ENCODE measurements at regions of chr12 and their contacts with region 1.

Region 1: GRCh38 chr12:49130151-49131050 is 794 bp downstream of the TUBA1B start:
- DNase-seq: peak; percentile 97
- ATAC-seq: peak; percentile 51
- H3K4me3 ChIP-seq: peak overlapping the region; percentile 94 to 100 (median 100)
- H3K4me3 Mint-ChIP-seq: peak overlapping the region; percentile 97
- H3K27ac ChIP-seq: peak overlapping the region; percentile 93 to 98
- H3K27ac Mint-ChIP-seq: peak overlapping the region; percentile 99
- H3K4me1 ChIP-seq: peaks cover 28 to 36% of the 10 kb centered on the region in 2 donors
- H3K4me1 Mint-ChIP-seq: peaks cover 56% of the 10 kb centered on the region
- H3K27me3 ChIP-seq: no peaks in the 10 kb centered on the region
- H3K27me3 Mint-ChIP-seq: no peaks in the 10 kb centered on the region
- CTCF ChIP-seq: peak; percentile 88

Region 2: GRCh38 chr12:49018261-49019119 is 111.9 kb before region 1 on chr12 and contains the start of gene PRKAG1:
- CTCF ChIA-PET with region 1: no interaction called
- POLR2A ChIA-PET with region 1: interaction called, 3 read pairs
- intact Hi-C with region 1: loop called (anchors 1 kb)
- DNase-seq: peak; percentile 98
- ATAC-seq: peak; percentile 88
- H3K4me3 ChIP-seq: peak within 1 kb of the TSS; percentile 79 to 88 (median 86)
- H3K4me3 Mint-ChIP-seq: peak within 1 kb of the TSS; percentile 91
- H3K27ac ChIP-seq: peak within 1 kb of the TSS; percentile 95 to 99
- H3K27ac Mint-ChIP-seq: peak within 1 kb of the TSS; percentile 98
- H3K4me1 ChIP-seq: peaks cover 18 to 21% of the 10 kb centered on the region in 2 donors
- H3K4me1 Mint-ChIP-seq: peaks cover 29% of the 10 kb centered on the region
- H3K27me3 ChIP-seq: no peaks in the 10 kb centered on the region
- H3K27me3 Mint-ChIP-seq: no peaks in the 10 kb centered on the region
- CTCF ChIP-seq: peak; percentile 74
- total RNA-seq, gene PRKAG1: 58.6 and 60.0 TPM in 2 replicates

Region 3: GRCh38 chr12:49069507-49070346 is 60.7 kb before region 1 on chr12 and contains the start of gene RHEBL1:
- CTCF ChIA-PET with region 1: interaction called, 13 read pairs
- POLR2A ChIA-PET with region 1: interaction called, 8 read pairs
- intact Hi-C with region 1: loop called (anchors 1 kb)
- DNase-seq: peak; percentile 99
- ATAC-seq: peak; percentile 100
- H3K4me3 ChIP-seq: peak within 1 kb of the TSS; percentile 69 to 96 (median 87)
- H3K4me3 Mint-ChIP-seq: peak within 1 kb of the TSS; percentile 94
- H3K27ac ChIP-seq: peak within 1 kb of the TSS; percentile 61 to 92
- H3K27ac Mint-ChIP-seq: peak within 1 kb of the TSS; percentile 86
- H3K4me1 ChIP-seq: peaks cover 10 to 15% of the 10 kb centered on the region in 2 donors
- H3K4me1 Mint-ChIP-seq: peaks cover 19% of the 10 kb centered on the region
- H3K27me3 ChIP-seq: no peaks in the 10 kb centered on the region
- H3K27me3 Mint-ChIP-seq: no peaks in the 10 kb centered on the region
- CTCF ChIP-seq: no peak
- total RNA-seq, gene RHEBL1: 3.0 TPM in 2 replicates

Region 4: DNA sequence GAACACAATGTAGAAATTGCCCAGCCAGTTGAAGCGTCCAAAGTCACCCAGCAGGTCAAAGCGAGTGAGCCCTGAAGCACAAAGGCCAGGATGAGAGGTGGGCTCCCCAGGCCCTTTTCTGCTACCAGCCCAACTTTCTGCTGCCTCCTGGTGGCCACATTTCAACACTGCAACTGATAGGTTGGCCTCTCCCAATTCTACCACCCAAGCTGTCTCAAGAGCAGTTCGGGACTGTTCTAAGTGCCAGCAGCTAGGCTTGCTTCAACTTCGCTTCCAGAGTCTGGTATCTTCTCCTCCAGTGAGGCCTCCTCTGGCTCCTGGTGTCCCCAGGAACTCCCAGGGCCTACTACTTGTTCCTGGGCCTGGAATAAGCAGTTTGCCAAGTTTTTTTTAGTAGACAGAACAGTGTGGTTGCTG is 32.4 kb before region 1 on chr12:
- CTCF ChIA-PET with region 1: interaction called, 30 read pairs
- POLR2A ChIA-PET with region 1: interaction called, 10 read pairs
- intact Hi-C with region 1: no loop called
- DNase-seq: peak; percentile 74
- ATAC-seq: peak; percentile 77
- H3K4me3 ChIP-seq: no peak overlapping the region
- H3K4me3 Mint-ChIP-seq: no peak overlapping the region
- H3K27ac ChIP-seq: no peak overlapping the region
- H3K27ac Mint-ChIP-seq: peak overlapping the region; percentile 20
- H3K4me1 ChIP-seq: peaks cover 15 to 16% of the 10 kb centered on the region in 2 donors
- H3K4me1 Mint-ChIP-seq: peaks cover 18% of the 10 kb centered on the region
- H3K27me3 ChIP-seq: peaks cover 0 to 22% (median 17%) of the 10 kb centered on the region in 4 experiments
- H3K27me3 Mint-ChIP-seq: peaks cover 17% of the 10 kb centered on the region
- CTCF ChIP-seq: peak; percentile 80

Region 5: DNA sequence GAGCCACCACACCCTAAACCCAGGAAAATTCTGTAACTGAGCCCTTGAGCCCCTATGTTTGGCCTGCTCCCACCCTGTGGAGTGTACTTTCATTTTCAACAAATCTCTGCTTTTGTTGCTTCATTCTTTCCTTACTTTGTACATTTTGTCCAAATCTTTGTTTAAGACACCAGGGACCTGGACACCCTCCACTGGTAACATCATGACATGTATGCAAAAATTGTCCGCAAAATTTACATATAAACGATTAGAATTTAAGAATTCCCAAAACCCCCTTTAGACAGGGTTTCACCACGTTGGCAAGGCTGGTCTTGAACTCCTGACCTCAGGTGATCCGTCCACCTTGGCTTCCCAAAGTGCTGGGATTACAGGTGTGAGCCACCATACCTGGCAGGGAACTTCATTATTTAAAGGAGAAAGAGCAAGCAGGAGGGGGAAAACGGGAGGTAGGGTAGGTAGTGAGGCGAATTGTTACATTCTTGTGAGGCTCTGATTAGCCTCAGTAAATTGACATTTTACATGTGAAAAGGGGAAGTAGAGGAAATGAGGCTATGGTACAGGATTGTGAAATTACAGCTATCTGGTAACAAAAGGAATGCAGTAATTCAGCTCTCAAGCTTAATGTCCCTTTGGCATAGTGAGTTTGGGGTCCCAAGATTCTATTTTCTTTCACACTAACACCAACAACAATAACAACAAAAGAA is 30.8 kb after region 1 on chr12:
- CTCF ChIA-PET with region 1: interaction called, 9 read pairs
- POLR2A ChIA-PET with region 1: interaction called, 15 read pairs
- intact Hi-C with region 1: loop called (anchors 2 kb)
- DNase-seq: peak; percentile 55
- ATAC-seq: peak; percentile 39
- H3K4me3 ChIP-seq: peak overlapping the region in 4 of 5 experiments; percentile 12 to 65 (median 40)
- H3K4me3 Mint-ChIP-seq: peak overlapping the region; percentile 88
- H3K27ac ChIP-seq: peak overlapping the region; percentile 66 to 75
- H3K27ac Mint-ChIP-seq: peak overlapping the region; percentile 87
- H3K4me1 ChIP-seq: peaks cover 27 to 31% of the 10 kb centered on the region in 2 donors
- H3K4me1 Mint-ChIP-seq: peaks cover 29% of the 10 kb centered on the region
- H3K27me3 ChIP-seq: no peaks in the 10 kb centered on the region
- H3K27me3 Mint-ChIP-seq: no peaks in the 10 kb centered on the region
- CTCF ChIP-seq: no peak

Region 6: GRCh38 chr12:49232940-49233841 is 102.8 kb after region 1 on chr12:
- CTCF ChIA-PET with region 1: interaction called, 48 read pairs
- POLR2A ChIA-PET with region 1: interaction called, 29 read pairs
- intact Hi-C with region 1: loop called (anchors 1 kb)
- DNase-seq: no peak
- ATAC-seq: no peak
- H3K4me3 ChIP-seq: peak overlapping the region; percentile 46 to 72 (median 64)
- H3K4me3 Mint-ChIP-seq: peak overlapping the region; percentile 96
- H3K27ac ChIP-seq: peak overlapping the region; percentile 56 to 73
- H3K27ac Mint-ChIP-seq: peak overlapping the region; percentile 90
- H3K4me1 ChIP-seq: peaks cover 5 to 17% of the 10 kb centered on the region in 2 donors
- H3K4me1 Mint-ChIP-seq: peaks cover 17% of the 10 kb centered on the region
- H3K27me3 ChIP-seq: no peaks in the 10 kb centered on the region
- H3K27me3 Mint-ChIP-seq: no peaks in the 10 kb centered on the region
- CTCF ChIP-seq: no peak

Region 7: DNA sequence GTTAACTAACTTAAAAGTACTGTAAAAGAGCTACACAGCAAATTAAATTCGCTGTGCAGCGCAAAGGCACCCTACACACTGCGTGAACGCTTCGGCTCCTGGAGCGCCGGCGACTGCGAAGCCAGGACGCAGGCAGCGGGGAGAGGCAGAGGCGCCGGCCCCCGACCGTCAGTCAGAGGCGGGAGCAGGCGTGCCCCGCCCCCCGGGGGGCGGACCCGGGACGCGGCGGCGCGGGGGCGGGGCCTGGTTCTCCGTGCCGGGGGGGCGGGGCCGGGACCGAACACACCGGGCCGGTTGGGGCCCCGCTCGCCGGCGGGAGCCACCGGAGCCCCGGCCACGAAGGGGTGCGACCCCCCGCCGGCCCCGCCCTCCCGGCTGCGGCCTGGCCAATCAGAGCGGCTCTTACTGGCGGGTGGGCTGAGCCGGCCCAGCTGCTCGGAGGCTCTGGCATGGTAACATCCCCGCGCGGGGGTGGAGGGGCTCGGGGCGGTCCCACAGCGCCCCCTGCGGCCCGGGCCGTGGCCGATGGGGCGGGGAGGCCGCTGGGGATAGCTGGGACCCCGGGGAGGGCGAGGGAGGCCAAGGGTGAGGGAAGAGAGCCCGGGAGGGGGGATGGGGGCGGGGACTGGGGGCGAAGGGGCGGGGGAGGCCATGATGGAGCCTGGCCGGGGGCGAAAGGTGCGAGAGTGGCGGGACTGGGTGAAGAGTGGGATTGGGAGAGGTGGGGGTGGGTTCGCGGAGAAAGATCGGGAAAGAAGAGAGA is 492.9 kb after region 1 on chr12 and contains the start of gene PRPF40B:
- CTCF ChIA-PET with region 1: no interaction called
- POLR2A ChIA-PET with region 1: no interaction called
- intact Hi-C with region 1: loop called (anchors 5 kb)
- DNase-seq: peak; percentile 92
- ATAC-seq: peak; percentile 85
- H3K4me3 ChIP-seq: peak within 1 kb of the TSS; percentile 56 to 85 (median 73)
- H3K4me3 Mint-ChIP-seq: peak within 1 kb of the TSS; percentile 94
- H3K27ac ChIP-seq: peak within 1 kb of the TSS; percentile 56 to 65
- H3K27ac Mint-ChIP-seq: peak within 1 kb of the TSS; percentile 91
- H3K4me1 ChIP-seq: peaks cover 11 to 21% of the 10 kb centered on the region in 2 donors
- H3K4me1 Mint-ChIP-seq: peaks cover 19% of the 10 kb centered on the region
- H3K27me3 ChIP-seq: no peaks in the 10 kb centered on the region
- H3K27me3 Mint-ChIP-seq: no peaks in the 10 kb centered on the region
- CTCF ChIP-seq: peak; percentile 51
- total RNA-seq, gene PRPF40B: 23.6 and 23.7 TPM in 2 replicates

Measured in B cell (primary cell).